Caco-2 (cell line): ENCODE measurements at regions of chr12 and their contacts with region 1.

Region 1: GRCh38 chr12:6996040-6996441 is 22.2 kb downstream of the LPCAT3 start:
- DNase-seq: peak; percentile 91 to 96
- H3K4me3 ChIP-seq: no peak overlapping the region
- H3K4me3 Mint-ChIP-seq: peak overlapping the region; percentile 20
- H3K27ac Mint-ChIP-seq: peak overlapping the region; percentile 62
- H3K4me1 ChIP-seq: peaks cover 53% of the 10 kb centered on the region
- H3K4me1 Mint-ChIP-seq: peaks cover 36% of the 10 kb centered on the region
- H3K27me3 ChIP-seq: no peaks in the 10 kb centered on the region
- H3K27me3 Mint-ChIP-seq: no peaks in the 10 kb centered on the region
- CTCF ChIP-seq: no peak

Region 2: GRCh38 chr12:7018350-7019042 is 22.5 kb after region 1 on chr12 and contains the start of gene LPCAT3:
- CTCF ChIA-PET with region 1: interaction called, 10 read pairs
- POLR2A ChIA-PET with region 1: interaction called, 8 read pairs
- intact Hi-C with region 1: loop called (anchors 1 kb)
- DNase-seq: peak; percentile 99 to 100
- H3K4me3 ChIP-seq: peak within 1 kb of the TSS; percentile 65
- H3K4me3 Mint-ChIP-seq: peak within 1 kb of the TSS; percentile 88
- H3K27ac Mint-ChIP-seq: peak within 1 kb of the TSS; percentile 72
- H3K4me1 ChIP-seq: peaks cover 19% of the 10 kb centered on the region
- H3K4me1 Mint-ChIP-seq: peaks cover 22% of the 10 kb centered on the region
- H3K27me3 ChIP-seq: no peaks in the 10 kb centered on the region
- H3K27me3 Mint-ChIP-seq: no peaks in the 10 kb centered on the region
- CTCF ChIP-seq: peak; percentile 95 to 96
- total RNA-seq, gene LPCAT3: 142 and 155 TPM in 2 replicates

Region 3: GRCh38 chr12:7197841-7198240 is 201.8 kb after region 1 on chr12:
- CTCF ChIA-PET with region 1: no interaction called
- POLR2A ChIA-PET with region 1: no interaction called
- intact Hi-C with region 1: no loop called
- DNase-seq: no peak
- H3K4me3 ChIP-seq: no peak overlapping the region
- H3K4me3 Mint-ChIP-seq: no peak overlapping the region
- H3K27ac Mint-ChIP-seq: no peak overlapping the region
- H3K4me1 ChIP-seq: peaks cover 12% of the 10 kb centered on the region
- H3K4me1 Mint-ChIP-seq: peaks cover 10% of the 10 kb centered on the region
- H3K27me3 ChIP-seq: no peaks in the 10 kb centered on the region
- H3K27me3 Mint-ChIP-seq: no peaks in the 10 kb centered on the region
- CTCF ChIP-seq: no peak